WTC11 (cell line): ENCODE measurements at regions of chr5 and their contacts with region 1.

Region 1: DNA sequence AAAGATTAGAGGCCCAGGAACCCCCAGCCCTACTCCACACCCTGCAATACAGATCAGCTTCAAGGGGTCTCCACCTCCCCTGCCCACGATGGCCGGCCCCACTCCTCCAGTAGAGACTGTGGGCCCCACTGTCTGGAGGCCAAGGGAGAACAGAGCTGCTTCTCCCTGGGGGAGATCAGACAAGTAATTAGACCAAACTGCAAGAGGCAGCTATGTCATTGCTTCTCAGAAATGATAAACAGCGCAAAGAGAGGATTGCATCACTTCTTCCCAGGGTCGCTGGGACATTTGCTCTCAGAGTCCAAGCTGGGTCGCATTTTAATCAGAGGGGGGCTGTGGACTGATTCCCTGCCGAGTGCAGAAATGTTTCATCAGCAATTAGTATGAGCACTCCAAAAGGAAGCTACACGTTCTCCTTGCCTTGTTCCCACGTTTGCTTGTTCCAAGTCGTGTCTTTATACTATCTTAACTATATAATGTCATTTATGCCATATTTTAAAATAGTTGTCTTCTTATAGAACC is 59.9 kb downstream of the ROPN1L start:
- DNase-seq: no peak
- ATAC-seq: no peak
- H3K4me3 Mint-ChIP-seq: no peak overlapping the region
- H3K27ac Mint-ChIP-seq: no peak overlapping the region
- H3K4me1 Mint-ChIP-seq: peaks cover 11% of the 10 kb centered on the region
- H3K27me3 Mint-ChIP-seq: no peaks in the 10 kb centered on the region
- CTCF ChIP-seq: no peak

Region 2: DNA sequence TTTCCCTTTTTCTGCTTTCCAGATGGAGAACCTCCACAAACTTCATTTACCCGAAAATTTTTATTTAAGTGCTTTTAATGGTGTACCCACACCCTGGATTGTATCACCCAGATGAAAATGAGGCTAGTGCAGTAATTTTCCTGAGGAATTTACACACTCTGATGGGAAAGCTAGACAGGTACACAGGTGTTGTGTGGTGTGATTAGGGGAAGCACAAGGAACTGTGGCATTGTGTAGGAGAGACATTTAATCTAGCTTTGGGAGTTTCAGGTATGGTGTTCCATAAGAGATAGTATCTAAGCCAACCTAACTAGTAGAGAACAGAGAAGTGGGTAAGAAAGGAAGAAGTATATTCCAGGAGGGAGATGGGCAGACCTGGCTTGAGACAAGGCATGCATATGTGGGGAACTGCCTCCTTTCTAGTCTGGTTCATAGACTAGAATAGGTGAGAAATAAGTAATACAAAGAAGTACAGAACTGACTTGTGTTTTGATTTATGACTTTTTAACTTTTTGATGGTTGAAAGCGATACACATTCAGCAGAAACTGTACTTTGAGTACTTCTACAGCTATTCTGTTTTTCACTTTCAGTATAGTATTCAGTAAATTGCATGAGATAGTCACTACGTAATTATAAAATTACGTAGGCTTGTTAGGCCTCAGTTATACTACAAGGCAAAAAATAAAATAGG is 82.8 kb before region 1 on chr5:
- CTCF ChIA-PET with region 1: no interaction called
- POLR2A ChIA-PET with region 1: no interaction called
- DNase-seq: no peak
- ATAC-seq: no peak
- H3K4me3 Mint-ChIP-seq: no peak overlapping the region
- H3K27ac Mint-ChIP-seq: no peak overlapping the region
- H3K4me1 Mint-ChIP-seq: peaks cover 21% of the 10 kb centered on the region
- H3K27me3 Mint-ChIP-seq: no peaks in the 10 kb centered on the region
- CTCF ChIP-seq: no peak

Region 3: GRCh38 chr5:10481241-10481937 is 20.2 kb before region 1 on chr5:
- CTCF ChIA-PET with region 1: interaction called, 10 read pairs
- POLR2A ChIA-PET with region 1: no interaction called
- DNase-seq: no peak
- ATAC-seq: peak; percentile 78
- H3K4me3 Mint-ChIP-seq: no peak overlapping the region
- H3K27ac Mint-ChIP-seq: no peak overlapping the region
- H3K4me1 Mint-ChIP-seq: peaks cover 28% of the 10 kb centered on the region
- H3K27me3 Mint-ChIP-seq: peaks cover 24% of the 10 kb centered on the region
- CTCF ChIP-seq: no peak

Region 4: DNA sequence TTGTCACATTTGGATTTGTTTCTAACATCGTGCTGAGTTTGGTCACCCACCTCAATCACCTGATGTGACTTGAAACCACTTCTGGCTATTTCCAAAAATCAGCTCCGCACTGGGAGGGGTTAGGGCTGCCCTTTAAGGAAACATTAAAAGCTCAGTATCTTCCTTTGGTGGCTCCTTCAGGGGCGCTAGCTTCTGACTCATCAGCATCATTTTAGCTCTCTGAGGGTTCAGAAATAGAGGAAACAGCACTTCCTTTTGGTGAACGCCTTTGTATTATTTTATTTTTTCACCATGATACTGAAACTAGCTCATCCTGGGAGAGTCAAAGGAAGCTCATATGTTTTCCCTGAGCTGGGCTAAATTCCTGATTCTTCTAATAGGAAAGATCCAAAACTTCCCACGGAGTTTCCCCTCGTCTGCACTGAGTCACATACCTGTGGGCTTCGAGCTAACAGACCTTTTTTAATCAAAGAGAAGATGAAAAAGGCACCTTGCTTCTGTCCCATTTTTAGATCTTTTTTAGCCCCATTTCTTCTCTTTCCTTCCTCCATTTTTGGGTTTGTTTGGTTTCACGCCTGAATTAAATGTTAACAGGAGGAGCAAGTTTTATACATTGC is 11.7 kb before region 1 on chr5:
- CTCF ChIA-PET with region 1: interaction called, 19 read pairs
- POLR2A ChIA-PET with region 1: no interaction called
- DNase-seq: no peak
- ATAC-seq: no peak
- H3K4me3 Mint-ChIP-seq: no peak overlapping the region
- H3K27ac Mint-ChIP-seq: no peak overlapping the region
- H3K4me1 Mint-ChIP-seq: peaks cover 15% of the 10 kb centered on the region
- H3K27me3 Mint-ChIP-seq: peaks cover 4% of the 10 kb centered on the region; the same call in 1 of the 2 replicates
- CTCF ChIP-seq: no peak

Region 5: GRCh38 chr5:10595678-10596309 is 94.2 kb after region 1 on chr5:
- CTCF ChIA-PET with region 1: no interaction called
- POLR2A ChIA-PET with region 1: no interaction called
- DNase-seq: no peak
- ATAC-seq: no peak
- H3K4me3 Mint-ChIP-seq: no peak overlapping the region
- H3K27ac Mint-ChIP-seq: no peak overlapping the region
- H3K4me1 Mint-ChIP-seq: peaks cover 14% of the 10 kb centered on the region
- H3K27me3 Mint-ChIP-seq: no peaks in the 10 kb centered on the region
- CTCF ChIP-seq: no peak